ENCODE measurements at regions of chr12 and their contacts with region 1.

Region 1: DNA sequence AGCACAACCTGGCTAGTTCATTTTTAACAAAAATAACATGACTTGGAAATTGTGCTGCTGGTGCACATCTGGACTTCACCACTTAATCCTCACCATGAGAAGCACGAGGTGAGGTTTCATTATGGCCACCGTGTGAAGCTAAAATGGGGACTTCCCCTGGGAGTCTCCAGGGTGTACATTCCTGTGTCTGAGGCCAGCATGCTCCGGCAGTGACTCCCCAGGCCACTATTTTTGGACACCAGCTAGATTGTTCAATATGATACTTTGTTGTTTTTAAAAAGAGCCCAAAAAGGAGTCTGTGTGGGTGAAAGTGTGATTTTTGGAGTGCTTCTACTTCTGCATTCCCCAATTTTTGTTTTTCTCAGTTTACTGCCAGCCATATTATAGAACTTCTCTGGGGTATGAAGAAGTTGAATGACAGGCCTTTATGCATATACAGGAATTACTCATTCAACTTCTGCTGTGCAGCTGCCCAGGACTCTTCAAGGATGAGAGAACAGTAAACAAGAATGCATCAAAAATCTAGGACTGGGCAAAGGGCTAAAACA is 16.9 kb upstream of the AICDA start:
- DNase-seq: peak; percentile 98
- ATAC-seq: peak; percentile 96
- H3K4me3 ChIP-seq: no peak overlapping the region
- H3K27ac ChIP-seq: peak overlapping the region; percentile 75
- H3K4me1 ChIP-seq: peaks cover 18% of the 10 kb centered on the region
- H3K27me3 ChIP-seq: no peaks in the 10 kb centered on the region
- CTCF ChIP-seq: no peak
- EP300 ChIP-seq: peak; percentile 91 to 98
- POLR2A ChIP-seq: no peak
- RAD21 ChIP-seq: peak; percentile 3; the same call in 1 of the 2 replicates

Region 2: DNA sequence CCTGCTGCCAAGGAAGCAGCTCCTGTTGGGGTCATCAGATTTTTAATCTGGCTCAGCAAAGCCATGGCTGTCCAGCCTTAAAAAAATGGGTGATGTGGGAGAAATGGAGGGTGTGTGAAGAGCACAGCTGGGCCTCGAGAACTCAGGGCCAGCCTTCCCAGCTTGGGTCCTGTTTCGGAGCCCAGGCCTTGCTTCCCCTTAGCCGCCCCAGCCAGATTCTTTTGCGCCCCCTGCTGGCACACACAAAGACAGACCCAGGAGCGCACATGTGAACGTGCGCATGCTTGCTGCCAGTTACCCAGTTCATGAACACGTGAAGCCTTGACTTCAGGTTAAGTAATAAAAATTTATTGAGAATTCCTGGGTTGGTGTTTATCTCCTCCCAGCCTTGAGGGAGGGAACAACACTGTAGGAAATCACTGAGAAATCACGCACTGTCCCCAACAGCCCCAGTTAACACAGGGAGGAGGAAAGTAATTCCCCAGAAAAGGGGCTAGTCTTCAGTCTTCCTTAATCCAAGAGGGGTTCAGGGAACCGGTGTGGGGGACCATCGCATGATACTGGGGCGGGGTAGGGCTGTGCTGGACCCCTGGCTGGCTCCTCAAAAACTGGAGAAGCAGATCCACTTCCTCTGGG is 1664.4 kb before region 1 on chr12:
- CTCF ChIA-PET with region 1: no interaction called
- POLR2A ChIA-PET with region 1: no interaction called
- RAD21 ChIA-PET with region 1: no interaction called
- SMC1A ChIA-PET with region 1: no interaction called
- in situ Hi-C with region 1: loop called (anchors 25 kb)
- intact Hi-C with region 1: no loop called
- DNase-seq: no peak
- ATAC-seq: peak; percentile 66
- H3K4me3 ChIP-seq: no peak overlapping the region
- H3K27ac ChIP-seq: peak overlapping the region; percentile 64
- H3K4me1 ChIP-seq: peaks cover 38% of the 10 kb centered on the region
- H3K27me3 ChIP-seq: no peaks in the 10 kb centered on the region
- CTCF ChIP-seq: peak; percentile 86 to 99 (median 96)
- EP300 ChIP-seq: 0 out of 4 replicates have a peak, but pooled peaks of 1 of the 2 experiments have one; percentile 11
- POLR2A ChIP-seq: peak; percentile 44; the same call in 1 of the 2 replicates
- RAD21 ChIP-seq: peak; percentile 88

Region 3: DNA sequence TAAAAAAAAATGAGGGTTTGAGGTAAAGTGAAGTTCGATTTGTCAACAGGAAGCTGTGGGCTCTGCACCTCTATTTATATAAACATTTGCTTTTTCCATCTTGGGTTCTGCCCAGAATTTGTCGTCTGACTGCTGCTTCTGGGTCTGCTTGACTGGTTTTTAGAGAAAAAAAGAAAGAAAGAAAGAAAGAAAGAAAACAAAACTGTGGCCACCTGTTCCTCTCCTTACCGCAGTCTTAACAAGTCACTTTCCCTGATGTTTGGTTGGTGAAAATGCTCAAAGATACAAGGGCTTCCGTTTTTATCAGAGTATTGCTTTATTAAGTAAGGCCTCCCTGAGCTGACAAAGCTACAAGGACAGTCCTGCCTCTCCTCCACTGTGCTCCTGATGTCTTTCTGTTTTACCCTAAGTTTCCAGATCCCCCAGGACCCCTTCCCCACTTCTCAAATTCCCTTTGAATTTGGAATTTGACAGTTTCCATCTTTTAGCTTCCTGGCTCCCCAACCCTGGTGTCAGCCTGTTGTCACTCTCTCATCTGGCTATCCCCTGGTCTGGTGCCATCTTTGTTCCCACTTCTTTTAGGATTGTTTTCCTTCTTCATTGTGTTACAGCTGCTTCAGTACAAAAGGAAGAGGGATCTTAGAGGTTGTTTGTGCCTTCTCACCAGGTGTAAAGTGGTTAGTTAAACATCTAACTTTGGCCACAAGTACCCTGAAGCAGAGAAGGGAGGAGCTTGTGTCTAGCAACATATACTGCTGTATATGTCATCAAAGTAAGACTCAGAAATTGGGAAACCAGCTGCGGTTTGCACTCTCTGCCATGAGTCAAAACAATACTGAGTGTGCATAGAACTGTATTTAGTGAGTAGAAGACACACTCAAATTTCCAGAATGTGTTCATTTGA is 15.0 kb after region 1 on chr12:
- CTCF ChIA-PET with region 1: interaction called, 17 read pairs
- POLR2A ChIA-PET with region 1: interaction called, 15 read pairs
- RAD21 ChIA-PET with region 1: interaction called, 30 read pairs
- SMC1A ChIA-PET with region 1: interaction called, 34 read pairs
- in situ Hi-C with region 1: no loop called
- intact Hi-C with region 1: loop called (anchors 1 kb)
- DNase-seq: peak; percentile 90
- ATAC-seq: peak; percentile 84
- H3K4me3 ChIP-seq: peak overlapping the region; percentile 49; the same call in 1 of the 2 replicates
- H3K27ac ChIP-seq: peak overlapping the region; percentile 97
- H3K4me1 ChIP-seq: peaks cover 41% of the 10 kb centered on the region
- H3K27me3 ChIP-seq: no peaks in the 10 kb centered on the region
- CTCF ChIP-seq: no peak
- EP300 ChIP-seq: peak; percentile 92 to 95
- POLR2A ChIP-seq: peak; percentile 59
- RAD21 ChIP-seq: no peak

Region 4: GRCh38 chr12:8996682-8997360 is 367.3 kb after region 1 on chr12:
- CTCF ChIA-PET with region 1: no interaction called
- POLR2A ChIA-PET with region 1: no interaction called
- RAD21 ChIA-PET with region 1: no interaction called
- SMC1A ChIA-PET with region 1: no interaction called
- in situ Hi-C with region 1: no loop called
- intact Hi-C with region 1: loop called (anchors 1 kb)
- DNase-seq: peak; percentile 77
- ATAC-seq: peak; percentile 98
- H3K4me3 ChIP-seq: 0 out of 2 replicates have a peak overlapping the region, but pooled peaks have one; percentile 14
- H3K27ac ChIP-seq: peak overlapping the region; percentile 20; the same call in 1 of the 2 replicates
- H3K4me1 ChIP-seq: peaks cover 16% of the 10 kb centered on the region; the same call in 1 of the 2 replicates
- H3K27me3 ChIP-seq: no peaks in the 10 kb centered on the region
- CTCF ChIP-seq: no peak
- EP300 ChIP-seq: peak; percentile 94 to 97
- POLR2A ChIP-seq: no peak
- RAD21 ChIP-seq: no peak

Region 5: GRCh38 chr12:9673404-9674225 is 1044.1 kb after region 1 on chr12:
- CTCF ChIA-PET with region 1: no interaction called
- POLR2A ChIA-PET with region 1: no interaction called
- RAD21 ChIA-PET with region 1: no interaction called
- SMC1A ChIA-PET with region 1: no interaction called
- in situ Hi-C with region 1: loop called (anchors 25 kb)
- intact Hi-C with region 1: no loop called
- DNase-seq: no peak
- ATAC-seq: peak; percentile 41
- H3K4me3 ChIP-seq: peak overlapping the region; percentile 61
- H3K27ac ChIP-seq: peak overlapping the region; percentile 91
- H3K4me1 ChIP-seq: peaks cover 25% of the 10 kb centered on the region
- H3K27me3 ChIP-seq: peaks cover 0 to 2% of the 10 kb centered on the region in 2 experiments; a peak in 1 of 4 replicates
- CTCF ChIP-seq: no peak
- EP300 ChIP-seq: no peak
- POLR2A ChIP-seq: no peak; the same call in 1 of the 2 replicates
- RAD21 ChIP-seq: no peak

Measured in GM12878 (cell line).